Panc1 (cell line): ENCODE measurements at regions of chr10 and their contacts with region 1.

Region 1: DNA sequence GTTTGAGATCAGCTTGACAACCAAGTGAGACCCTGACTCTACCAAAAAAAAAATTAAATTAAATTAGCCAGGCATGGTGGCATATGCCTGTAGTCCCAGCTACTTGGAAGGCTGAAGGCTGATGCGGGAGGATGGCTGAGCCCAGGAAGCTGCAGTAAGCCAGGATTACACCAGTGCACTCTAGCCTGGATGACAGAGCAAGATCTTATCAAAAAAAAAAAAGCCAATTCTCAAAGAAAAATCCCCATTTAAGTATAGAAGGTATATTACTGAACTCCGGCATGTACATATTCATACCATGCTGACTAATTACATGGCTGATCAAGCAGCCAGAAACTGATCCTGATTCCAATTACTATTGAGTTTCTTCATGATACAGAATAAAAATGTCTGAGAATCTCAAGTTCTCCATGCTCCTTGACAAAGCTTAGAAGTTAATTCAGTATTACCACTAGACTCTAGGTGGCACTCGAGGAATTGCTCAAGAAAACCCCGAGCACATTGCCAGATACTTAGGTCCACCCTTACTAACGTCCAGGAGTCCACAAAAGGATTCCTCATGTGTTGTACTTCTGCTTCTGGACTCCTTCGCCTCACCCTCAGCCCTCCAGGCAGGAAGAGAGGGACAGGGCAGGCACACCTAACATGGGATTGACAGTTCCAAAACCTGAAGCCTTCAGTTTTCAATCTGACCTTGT is 148.9 kb downstream of the PARD3 start:
- DNase-seq: peak; percentile 76
- ATAC-seq: peak; percentile 86
- H3K4me3 ChIP-seq: no peak overlapping the region
- H3K27ac ChIP-seq: no peak overlapping the region
- H3K4me1 ChIP-seq: peaks cover 2% of the 10 kb centered on the region; the same call in 1 of the 2 replicates
- H3K27me3 ChIP-seq: no peaks in the 10 kb centered on the region
- CTCF ChIP-seq: peak; percentile 68

Region 2: DNA sequence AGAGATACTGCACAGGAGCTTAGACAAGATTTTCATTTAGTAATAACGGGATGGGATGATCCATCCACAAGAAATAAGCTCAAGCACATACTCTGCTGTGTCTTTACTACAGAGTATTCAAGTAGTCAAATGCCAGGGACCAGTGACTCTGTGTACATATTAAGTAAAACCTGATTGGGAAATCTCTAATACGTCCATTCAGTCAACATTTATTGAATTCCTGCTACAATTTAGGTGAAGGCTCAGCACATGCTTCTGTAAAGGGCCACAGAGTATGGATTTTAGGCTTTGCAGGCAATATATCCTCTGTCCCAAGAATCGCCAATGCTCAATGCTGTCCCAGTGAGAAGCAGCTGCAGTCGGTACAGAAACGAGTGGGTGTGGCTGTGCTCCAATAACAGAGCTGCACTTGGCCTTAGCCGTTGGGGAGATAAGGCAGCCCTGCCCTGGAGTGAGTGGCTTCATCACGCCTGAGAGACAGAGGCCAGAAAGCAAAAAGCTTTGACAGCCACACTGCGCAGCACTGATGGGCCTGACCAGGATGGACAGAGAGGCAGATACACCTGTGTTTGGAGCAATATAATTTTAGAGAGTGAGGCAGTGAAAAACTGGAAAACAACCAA is 37.9 kb before region 1 on chr10:
- CTCF ChIA-PET with region 1: no interaction called
- POLR2A ChIA-PET with region 1: no interaction called
- in situ Hi-C with region 1: no loop called
- intact Hi-C with region 1: no loop called
- DNase-seq: no peak
- ATAC-seq: no peak
- H3K4me3 ChIP-seq: no peak overlapping the region
- H3K27ac ChIP-seq: no peak overlapping the region
- H3K4me1 ChIP-seq: no peaks in the 10 kb centered on the region
- H3K27me3 ChIP-seq: no peaks in the 10 kb centered on the region
- CTCF ChIP-seq: no peak

Region 3: GRCh38 chr10:34815185-34816084 is 149.3 kb after region 1 on chr10 and contains the start of gene PARD3:
- CTCF ChIA-PET with region 1: no interaction called
- POLR2A ChIA-PET with region 1: no interaction called
- in situ Hi-C with region 1: no loop called
- intact Hi-C with region 1: loop called (anchors 10 kb)
- DNase-seq: no peak
- ATAC-seq: peak; percentile 89
- H3K4me3 ChIP-seq: peak within 1 kb of the TSS; percentile 64 to 70
- H3K27ac ChIP-seq: peak within 1 kb of the TSS; percentile 51; the same call in 1 of the 2 replicates
- H3K4me1 ChIP-seq: peaks cover 19% of the 10 kb centered on the region
- H3K27me3 ChIP-seq: no peaks in the 10 kb centered on the region
- CTCF ChIP-seq: no peak
- total RNA-seq, gene PARD3: 29.8 TPM

Region 4: DNA sequence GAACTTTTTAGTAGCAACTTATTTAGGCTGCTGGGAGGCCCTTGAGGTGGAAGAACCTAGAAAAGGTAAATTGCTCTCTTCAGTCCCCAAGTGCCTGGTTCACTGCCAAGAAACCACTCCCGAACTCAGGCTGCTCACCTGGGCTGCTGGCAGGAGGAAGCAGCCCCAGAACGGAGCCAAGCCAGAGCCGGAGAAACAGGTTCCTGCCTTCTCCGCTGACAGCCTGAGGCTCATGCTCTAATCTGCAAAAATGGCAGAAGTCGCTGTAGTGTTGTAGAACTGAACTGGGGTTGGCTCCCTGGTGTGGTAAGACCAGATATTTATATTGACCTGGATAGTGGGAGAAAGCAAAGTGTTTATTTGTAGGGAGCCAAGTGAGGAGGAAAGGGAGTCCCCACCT is 288.0 kb after region 1 on chr10:
- CTCF ChIA-PET with region 1: no interaction called
- POLR2A ChIA-PET with region 1: no interaction called
- in situ Hi-C with region 1: no loop called
- intact Hi-C with region 1: loop called (anchors 10 kb)
- DNase-seq: no peak
- ATAC-seq: no peak
- H3K4me3 ChIP-seq: no peak overlapping the region
- H3K27ac ChIP-seq: no peak overlapping the region
- H3K4me1 ChIP-seq: no peaks in the 10 kb centered on the region
- H3K27me3 ChIP-seq: no peaks in the 10 kb centered on the region
- CTCF ChIP-seq: no peak

Region 5: GRCh38 chr10:35993591-35994515 is 1327.7 kb after region 1 on chr10:
- CTCF ChIA-PET with region 1: interaction called, 12 read pairs
- POLR2A ChIA-PET with region 1: no interaction called
- in situ Hi-C with region 1: no loop called
- intact Hi-C with region 1: no loop called
- DNase-seq: no peak
- ATAC-seq: no peak
- H3K4me3 ChIP-seq: no peak overlapping the region
- H3K27ac ChIP-seq: no peak overlapping the region
- H3K4me1 ChIP-seq: no peaks in the 10 kb centered on the region
- H3K27me3 ChIP-seq: no peaks in the 10 kb centered on the region
- CTCF ChIP-seq: no peak